Posterior vena cava (tissue), 2 donors: ENCODE measurements at regions of chr21 and their contacts with region 1.

Region 1: GRCh38 chr21:18298228-18298627 is 53.6 kb downstream of the CHODL start:
- DNase-seq: no peak

Region 2: DNA sequence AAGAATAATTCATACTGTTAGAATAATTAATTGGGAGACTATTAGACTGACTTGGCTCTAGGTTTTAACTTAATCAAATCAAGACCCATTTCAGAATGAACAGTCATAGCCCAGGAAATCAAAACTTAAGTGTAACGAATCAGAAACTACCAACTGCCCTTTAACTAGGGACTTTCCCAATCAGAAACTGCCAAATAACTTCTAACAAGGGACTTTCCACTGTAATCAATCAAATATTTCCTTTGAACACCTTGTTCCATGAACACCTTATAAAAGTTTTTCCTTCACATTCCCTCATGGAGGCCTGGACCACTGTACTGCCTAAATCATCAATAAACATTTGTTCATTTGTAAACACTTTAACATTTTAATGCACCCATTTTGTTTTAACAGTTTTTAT is 1160.1 kb after region 1 on chr21:
- intact Hi-C with region 1: loop called in 1 of 2 experiments (anchors 5 kb)
- DNase-seq: no peak